ENCODE measurements at regions of chr18 and their contacts with region 1.

Region 1: GRCh38 chr18:52312321-52312720 is 27.7 kb upstream of the DCC start:
- DNase-seq: no peak
- ATAC-seq: no peak

Region 2: DNA sequence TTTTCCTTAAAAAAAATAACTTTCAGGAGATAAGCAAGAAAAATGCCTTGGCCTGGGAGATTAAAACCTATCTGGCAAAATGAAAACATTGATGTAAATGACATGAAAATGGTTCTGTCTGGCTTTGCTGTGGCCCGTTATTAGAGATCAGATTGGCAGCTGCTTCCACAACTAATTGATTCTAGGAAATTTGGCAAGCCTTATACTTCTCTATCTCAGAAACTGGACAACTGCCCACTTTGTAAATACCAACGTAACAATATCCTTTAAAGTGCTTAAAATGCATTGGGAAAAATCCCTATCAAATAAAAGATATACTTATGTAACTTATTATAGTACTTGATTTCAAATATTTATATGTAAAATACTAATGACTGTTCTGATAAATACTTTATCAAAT is 1951.7 kb before region 1 on chr18:
- intact Hi-C with region 1: no loop called
- DNase-seq: no peak
- ATAC-seq: no peak

Region 3: DNA sequence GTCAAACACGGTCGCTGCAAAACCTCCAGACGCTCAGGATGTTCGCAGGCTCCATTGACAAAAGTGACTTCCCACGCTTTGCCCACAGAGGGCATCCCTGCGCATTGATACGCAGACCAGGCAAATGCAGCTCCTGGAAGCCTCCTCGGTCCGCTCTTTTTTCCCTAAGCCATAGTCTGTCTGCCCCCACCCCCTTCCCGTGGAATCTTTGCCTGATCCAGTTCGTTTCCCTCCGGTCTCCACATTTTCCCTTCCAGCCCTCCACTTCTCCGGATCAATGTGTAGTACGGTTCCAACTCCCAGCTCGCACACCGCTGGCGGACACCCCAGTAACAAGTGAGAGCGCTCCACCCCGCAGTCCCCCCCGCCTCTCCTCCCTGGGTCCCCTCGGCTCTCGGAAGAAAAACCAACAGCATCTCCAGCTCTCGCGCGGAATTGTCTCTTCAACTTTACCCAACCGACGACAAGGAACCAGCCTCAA is 27.6 kb after region 1 on chr18 and contains the start of gene DCC:
- intact Hi-C with region 1: loop called (anchors 2 kb)
- DNase-seq: no peak
- ATAC-seq: peak; percentile 70
- total RNA-seq, gene DCC: not detected

Measured in sciatic nerve (tissue), 2 donors.